ENCODE measurements at regions of chr6 and their contacts with region 1.

Region 1: DNA sequence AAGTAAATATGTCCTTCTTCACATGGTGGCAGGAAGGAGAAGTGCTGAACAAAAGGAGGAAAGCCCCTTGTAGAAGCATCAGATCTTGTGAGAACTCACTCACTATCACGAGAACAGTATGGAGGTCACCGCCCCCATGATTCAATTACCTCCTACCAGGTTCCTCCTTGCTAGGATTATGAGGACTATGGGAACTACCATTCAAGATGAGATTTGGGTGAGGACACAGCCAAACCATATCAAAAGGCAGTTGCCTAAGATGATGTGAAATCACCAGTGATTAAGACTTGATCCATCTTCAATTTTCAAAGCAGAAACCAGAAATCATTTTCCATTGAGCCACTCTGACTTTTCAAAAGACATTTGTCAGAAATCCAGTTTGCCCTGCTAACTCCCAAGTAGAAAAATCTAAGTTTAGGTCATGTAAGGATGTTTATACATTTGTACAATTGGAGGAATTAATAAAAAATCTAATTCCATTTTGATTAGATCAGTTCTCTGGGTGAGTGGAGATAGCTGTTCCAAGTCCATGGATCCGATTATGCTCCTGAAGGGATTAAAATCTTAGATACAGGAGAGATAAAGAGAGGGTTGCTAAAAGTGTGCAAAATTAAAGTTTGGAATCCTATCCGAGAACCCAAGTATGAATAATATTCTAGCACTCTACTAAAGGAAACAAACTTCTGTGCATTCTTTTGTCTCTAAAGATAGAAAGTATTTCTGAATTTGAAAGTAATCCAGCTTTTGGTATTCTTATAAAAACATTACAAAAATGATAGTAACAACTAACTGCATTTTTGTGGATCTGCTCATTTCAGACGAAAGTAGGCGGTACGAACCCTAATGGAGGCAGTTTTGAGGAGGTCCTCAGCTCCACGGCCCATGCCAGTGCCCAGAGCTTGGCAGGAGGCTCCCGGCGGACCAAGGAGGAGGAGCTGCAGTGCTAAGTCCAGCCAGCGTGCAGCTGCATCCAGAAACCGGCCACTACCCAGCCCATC is 39.5 kb downstream of the HDDC2 start:
- DNase-seq: peak; percentile 85 to 87
- ATAC-seq: peak; percentile 67
- H3K4me3 ChIP-seq: no peak overlapping the region
- H3K27ac ChIP-seq: peak overlapping the region; percentile 28 to 94
- H3K4me1 ChIP-seq: peaks cover 2 to 3% of the 10 kb centered on the region in 2 donors
- H3K27me3 ChIP-seq: no peaks in the 10 kb centered on the region

Region 2: GRCh38 chr6:125197795-125198269 is 64.5 kb before region 1 on chr6:
- intact Hi-C with region 1: loop called in 1 of 2 experiments (anchors 5 kb)
- DNase-seq: peak; percentile 76 to 84
- ATAC-seq: peak; percentile 90
- H3K4me3 ChIP-seq: no peak overlapping the region
- H3K27ac ChIP-seq: peak overlapping the region in 1 of 2 donors; percentile 43
- H3K4me1 ChIP-seq: peaks cover 9 to 15% of the 10 kb centered on the region in 2 donors
- H3K27me3 ChIP-seq: peaks cover 0 to 2% of the 10 kb centered on the region in 2 donors

Region 3: GRCh38 chr6:125220712-125221111 is 41.6 kb before region 1 on chr6:
- intact Hi-C with region 1: loop called in 1 of 2 experiments (anchors 5 kb)
- DNase-seq: peak in 1 of 2 donors; percentile 58
- ATAC-seq: peak; percentile 79
- H3K4me3 ChIP-seq: no peak overlapping the region
- H3K27ac ChIP-seq: peak overlapping the region; percentile 72 to 93
- H3K4me1 ChIP-seq: peaks cover 4 to 6% of the 10 kb centered on the region in 2 donors
- H3K27me3 ChIP-seq: no peaks in the 10 kb centered on the region

Region 4: DNA sequence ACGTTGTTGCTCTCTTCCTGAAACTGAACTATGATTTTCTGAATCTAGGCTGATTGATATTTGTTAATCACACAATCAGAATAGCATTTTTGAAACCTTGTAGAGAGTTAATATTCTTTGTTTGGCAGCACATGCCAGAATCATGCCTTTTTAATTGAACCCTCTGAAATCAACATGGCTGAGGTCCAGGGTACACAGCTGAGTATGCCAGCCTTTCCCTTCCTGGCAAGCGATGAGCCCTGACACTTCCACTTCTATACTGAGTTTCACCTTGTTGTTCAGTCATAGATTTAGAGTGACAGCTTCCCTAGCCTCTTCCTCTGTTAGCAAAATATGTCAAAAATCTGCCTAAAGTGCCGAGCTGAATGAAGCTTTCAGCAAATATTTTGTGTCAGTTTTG is 32.6 kb after region 1 on chr6:
- intact Hi-C with region 1: loop called in 1 of 2 experiments (anchors 2 kb)
- DNase-seq: no peak
- ATAC-seq: no peak
- H3K4me3 ChIP-seq: no peak overlapping the region
- H3K27ac ChIP-seq: peak overlapping the region in 1 of 2 donors; percentile 28
- H3K4me1 ChIP-seq: peaks cover 0 to 5% of the 10 kb centered on the region in 2 donors
- H3K27me3 ChIP-seq: no peaks in the 10 kb centered on the region

Region 5: DNA sequence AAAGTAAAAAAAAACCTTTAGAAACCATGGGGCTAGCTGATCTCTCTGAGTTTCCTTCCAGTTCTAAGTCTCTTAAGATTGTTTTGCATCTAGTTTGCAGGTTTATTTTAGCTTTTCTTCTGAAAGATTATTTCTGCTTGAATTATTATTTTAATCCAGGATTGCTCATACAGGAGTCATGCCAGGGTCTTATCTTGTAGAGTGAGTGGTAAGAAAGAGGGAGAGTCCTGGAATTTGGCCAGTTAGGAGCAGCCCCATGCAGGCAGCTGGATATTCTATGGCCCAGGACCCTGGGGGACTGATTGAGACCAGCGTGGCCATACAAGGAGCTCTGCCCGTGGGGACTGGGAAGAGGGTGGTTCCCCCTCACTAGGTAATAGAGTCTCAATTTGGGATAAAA is 308.2 kb after region 1 on chr6:
- intact Hi-C with region 1: no loop called
- DNase-seq: no peak
- ATAC-seq: peak; percentile 38
- H3K4me3 ChIP-seq: no peak overlapping the region
- H3K27ac ChIP-seq: peak overlapping the region in 1 of 2 donors; percentile 48
- H3K4me1 ChIP-seq: peaks cover 1 to 22% of the 10 kb centered on the region in 2 donors
- H3K27me3 ChIP-seq: no peaks in the 10 kb centered on the region